A549 (cell line): ENCODE measurements at regions of chr12 and their contacts with region 1.

Region 1: GRCh38 chr12:52865090-52865944 is 16.5 kb upstream of the KRT78 start:
- DNase-seq: peak; percentile 92 to 94
- ATAC-seq: peak; percentile 79 to 86
- H3K4me3 ChIP-seq: no peak overlapping the region
- H3K27ac ChIP-seq: peak overlapping the region; percentile 61 to 73
- H3K4me1 ChIP-seq: peaks cover 41% of the 10 kb centered on the region
- CTCF ChIP-seq: peak; percentile 77
- EP300 ChIP-seq: no peak
- POLR2A ChIP-seq: no peak
- RAD21 ChIP-seq: peak; percentile 91 to 96

Region 2: DNA sequence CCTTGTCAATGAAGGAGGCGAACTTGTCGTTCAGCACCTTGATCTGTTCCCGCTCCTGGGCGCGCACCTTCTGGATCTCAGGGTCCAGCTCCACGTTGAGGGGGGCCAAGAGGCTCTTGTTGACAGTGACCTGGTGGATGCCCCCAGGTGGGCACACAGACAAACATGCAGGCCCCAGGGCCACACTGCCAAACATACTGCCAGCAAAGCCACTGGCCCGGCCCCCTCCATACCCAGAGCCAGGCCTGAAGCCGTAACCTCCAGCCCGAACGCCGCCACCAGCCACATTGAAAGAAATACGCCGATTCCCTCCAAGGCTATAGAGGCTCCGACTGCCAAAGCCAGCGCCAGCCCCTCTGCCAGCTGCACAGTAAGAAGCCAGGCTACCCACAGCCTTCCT is 292.0 kb before region 1 on chr12:
- CTCF ChIA-PET with region 1: interaction called, 492 read pairs
- POLR2A ChIA-PET with region 1: no interaction called
- DNase-seq: no peak
- ATAC-seq: no peak
- H3K4me3 ChIP-seq: no peak overlapping the region
- H3K27ac ChIP-seq: no peak overlapping the region
- H3K4me1 ChIP-seq: no peaks in the 10 kb centered on the region
- CTCF ChIP-seq: no peak
- EP300 ChIP-seq: no peak
- POLR2A ChIP-seq: no peak
- RAD21 ChIP-seq: no peak

Region 3: GRCh38 chr12:52851787-52852186 is 13.5 kb before region 1 on chr12:
- CTCF ChIA-PET with region 1: interaction called, 12 read pairs
- POLR2A ChIA-PET with region 1: no interaction called
- DNase-seq: no peak
- ATAC-seq: no peak
- H3K4me3 ChIP-seq: no peak overlapping the region
- H3K27ac ChIP-seq: no peak overlapping the region
- H3K4me1 ChIP-seq: peaks cover 9% of the 10 kb centered on the region
- CTCF ChIP-seq: no peak
- EP300 ChIP-seq: no peak
- POLR2A ChIP-seq: no peak
- RAD21 ChIP-seq: no peak

Region 4: DNA sequence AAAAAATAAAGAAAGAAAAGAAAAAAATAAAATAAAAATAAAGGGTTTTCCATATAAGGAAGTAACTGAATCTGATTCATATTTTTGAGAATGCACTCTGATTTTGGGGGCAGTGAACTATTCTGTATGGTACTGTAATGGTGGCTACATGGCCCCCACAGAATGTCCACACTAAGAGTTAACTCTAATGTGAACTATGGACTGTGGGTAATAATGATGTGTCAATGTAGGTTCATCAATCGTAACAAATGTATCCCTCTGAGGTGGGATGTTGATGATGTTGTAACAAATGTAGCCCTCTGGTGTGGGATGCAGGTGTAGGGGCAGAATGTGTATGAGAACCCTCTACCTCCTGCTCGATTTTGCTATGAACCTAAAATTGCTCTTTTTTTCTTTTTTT is 25.7 kb after region 1 on chr12:
- CTCF ChIA-PET with region 1: no interaction called
- POLR2A ChIA-PET with region 1: no interaction called
- DNase-seq: peak in 1 of 2 experiments; percentile 31
- ATAC-seq: no peak
- H3K4me3 ChIP-seq: no peak overlapping the region
- H3K27ac ChIP-seq: 0 out of 6 replicates have a peak overlapping the region, but pooled peaks of 1 of the 2 experiments have one; percentile 17
- H3K4me1 ChIP-seq: peaks cover 33% of the 10 kb centered on the region
- CTCF ChIP-seq: no peak
- EP300 ChIP-seq: no peak
- POLR2A ChIP-seq: no peak
- RAD21 ChIP-seq: no peak

Region 5: GRCh38 chr12:52929538-52929937 is 64.2 kb after region 1 on chr12:
- CTCF ChIA-PET with region 1: no interaction called
- POLR2A ChIA-PET with region 1: no interaction called
- DNase-seq: no peak
- ATAC-seq: no peak
- H3K4me3 ChIP-seq: no peak overlapping the region
- H3K27ac ChIP-seq: peak overlapping the region; percentile 54 to 96; a peak in 5 of 6 replicates
- H3K4me1 ChIP-seq: peaks cover 51% of the 10 kb centered on the region
- CTCF ChIP-seq: no peak
- EP300 ChIP-seq: no peak
- POLR2A ChIP-seq: no peak
- RAD21 ChIP-seq: no peak